ENCODE measurements at regions of chr10 and their contacts with region 1.

Region 1: DNA sequence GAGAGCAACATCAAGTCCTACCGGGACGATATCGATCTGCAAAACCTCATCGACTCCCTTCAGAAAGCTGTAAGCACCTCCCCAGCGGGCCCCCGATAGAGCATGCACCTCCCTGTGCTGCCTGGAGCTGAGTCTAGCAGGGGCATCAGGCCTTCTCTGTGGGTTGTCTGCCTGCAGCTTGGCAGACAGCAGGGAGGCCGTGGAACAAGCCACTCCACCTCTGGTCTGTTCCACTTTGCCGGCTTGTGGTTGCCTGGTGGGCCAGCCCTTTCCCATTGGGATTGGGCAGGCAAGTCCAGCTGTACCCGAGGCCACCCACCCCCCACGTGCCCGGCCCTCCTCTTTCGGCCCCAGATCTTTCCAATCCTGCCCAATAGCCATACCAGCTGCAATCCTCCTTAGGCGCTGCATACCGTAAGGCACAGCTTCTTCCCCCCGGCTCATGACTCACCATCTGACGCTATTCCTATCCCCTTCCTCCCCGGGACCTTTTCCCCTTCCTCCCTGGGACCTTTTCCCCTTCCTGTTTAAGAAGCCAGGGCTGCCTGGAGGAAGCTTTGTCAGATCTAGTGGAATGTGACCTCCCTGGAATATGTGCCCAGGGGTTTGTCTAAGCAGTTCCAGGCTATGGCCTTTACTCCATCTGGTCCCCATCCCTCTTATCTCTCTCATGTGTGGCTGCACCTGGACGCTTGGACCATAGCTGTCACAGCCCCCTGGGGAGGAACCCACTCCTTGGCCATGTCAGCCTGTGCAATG is 28.1 kb upstream of the SH2D4B start:
- DNase-seq: no peak

Region 2: DNA sequence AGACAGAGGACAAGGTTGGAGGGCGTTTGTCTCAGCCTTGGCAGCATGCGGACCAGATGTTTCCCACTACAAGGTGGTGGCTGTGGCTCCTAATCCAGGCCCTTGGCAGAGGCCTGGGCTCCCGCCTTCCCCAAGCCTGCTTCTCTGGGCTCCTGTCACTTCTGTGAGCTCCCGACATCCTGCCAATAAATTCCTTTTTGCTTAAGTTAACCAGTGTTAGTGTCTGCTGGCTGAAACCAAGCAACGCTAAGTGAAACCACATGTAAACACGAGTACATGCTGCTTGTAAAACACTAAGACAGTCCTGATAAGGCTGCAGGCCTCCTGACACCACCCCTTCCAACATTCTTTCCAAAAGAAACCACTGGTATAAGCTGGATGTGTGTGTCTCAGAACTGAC is 1704.4 kb before region 1 on chr10:
- intact Hi-C with region 1: no loop called
- DNase-seq: no peak

Region 3: DNA sequence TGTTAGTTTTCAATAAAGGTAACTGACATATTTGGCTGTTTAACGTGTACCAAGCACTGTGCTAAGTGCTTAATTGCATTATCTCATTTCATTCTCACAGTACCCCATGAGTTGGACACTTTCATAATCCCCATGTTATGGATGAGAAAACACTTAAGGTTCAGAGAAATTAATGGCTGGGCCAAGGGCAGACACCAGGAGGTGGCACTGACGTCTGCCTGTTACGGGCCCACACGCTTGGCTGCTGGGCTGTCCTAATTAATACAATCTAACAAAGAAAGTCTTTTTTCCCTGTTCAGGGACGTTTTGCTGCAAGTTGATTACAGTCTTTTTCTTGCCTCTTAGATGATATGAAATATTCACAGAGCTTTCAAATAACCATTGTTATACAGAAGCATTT is 136.9 kb before region 1 on chr10:
- intact Hi-C with region 1: no loop called
- DNase-seq: no peak

Region 4: DNA sequence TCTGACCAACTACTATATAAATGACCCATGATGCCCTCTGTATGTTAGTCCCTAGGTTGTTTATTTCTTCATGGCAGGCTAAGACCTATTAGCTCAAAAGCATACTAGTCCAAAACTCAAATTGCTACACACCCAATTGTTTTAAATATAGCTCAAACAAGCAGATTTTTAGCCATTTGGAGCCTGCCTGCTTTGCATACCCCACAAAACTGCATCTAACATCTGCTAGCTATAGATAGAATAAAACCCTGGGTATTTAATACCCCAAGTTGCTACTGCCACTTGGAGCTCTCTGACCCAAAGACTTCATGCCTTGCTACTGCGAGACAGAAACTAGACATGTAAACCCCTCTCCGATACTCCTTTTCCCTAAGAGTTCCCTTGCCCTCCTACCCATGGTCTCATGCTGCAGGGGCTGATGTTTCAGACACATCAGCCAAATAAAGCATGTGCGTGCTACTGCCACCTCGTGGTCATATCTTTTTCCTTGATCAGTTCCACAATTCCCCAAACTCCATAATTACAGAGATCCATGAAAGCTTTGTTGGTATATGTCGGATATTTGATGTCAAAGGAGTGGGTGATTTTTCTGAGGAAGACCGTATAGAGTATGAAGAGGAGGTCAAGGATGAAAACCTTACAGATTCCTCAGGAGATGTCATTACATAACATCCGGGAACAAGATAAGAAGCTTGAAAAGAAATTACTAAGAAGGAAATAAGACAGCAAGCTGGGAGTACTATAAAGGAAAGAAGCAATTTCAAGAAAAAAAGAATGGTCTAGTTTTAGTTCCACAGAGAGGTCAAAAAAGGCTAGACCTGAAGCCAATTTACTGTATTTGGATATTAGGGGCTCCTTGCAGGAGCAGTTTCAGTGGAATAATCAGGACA is 414.7 kb after region 1 on chr10:
- intact Hi-C with region 1: loop called in 1 of 2 experiments (anchors 10 kb)
- DNase-seq: no peak